Motor neuron (in vitro differentiated cells): ENCODE measurements at regions of chr22 and their contacts with region 1.

Region 1: DNA sequence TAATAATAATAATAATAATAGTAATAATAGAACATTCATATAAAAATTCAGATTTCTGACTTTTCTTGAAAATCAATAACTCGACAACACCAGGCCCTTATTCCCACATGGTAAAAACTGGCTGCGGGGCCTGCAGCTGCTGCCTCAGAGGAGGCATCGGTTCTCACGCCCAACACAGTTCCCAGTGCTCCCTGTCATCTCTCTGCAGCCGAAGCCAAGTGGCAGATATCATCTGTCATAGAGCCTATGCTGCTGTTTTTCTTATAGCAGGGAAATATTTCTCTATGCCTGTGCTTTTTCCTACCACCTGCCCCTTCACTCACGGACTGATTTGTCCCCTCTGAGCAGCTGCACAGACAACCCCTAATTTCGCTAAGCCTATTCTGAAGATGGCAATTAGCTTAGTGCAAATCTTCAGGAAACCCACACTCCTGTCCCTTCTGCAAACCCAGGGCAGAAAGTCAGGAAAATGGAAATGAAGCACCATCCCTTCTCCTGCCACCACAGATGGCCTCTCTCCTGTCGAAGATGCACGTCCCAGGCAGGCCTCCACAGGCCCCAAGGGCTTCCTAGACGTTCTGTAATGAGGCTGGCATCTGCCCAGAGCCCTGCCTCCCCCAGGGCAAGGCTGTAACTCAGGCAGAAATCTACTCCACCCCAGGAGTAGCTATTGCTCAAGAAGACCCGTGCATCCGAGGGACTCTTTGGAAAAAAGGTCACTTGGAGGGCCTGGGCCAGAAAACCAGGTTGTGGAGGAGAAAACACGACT is 66.6 kb downstream of the SYN3 start:
- ATAC-seq: peak in 3 of 8 experiments; percentile 76 to 78 (median 77)
- H3K4me3 ChIP-seq: no peak overlapping the region
- H3K27ac ChIP-seq: peak overlapping the region; percentile 60 to 68
- H3K4me1 ChIP-seq: peaks cover 47 to 48% of the 10 kb centered on the region in 2 donors

Region 2: GRCh38 chr22:32528984-32529982 is 462.3 kb before region 1 on chr22:
- in situ Hi-C with region 1: loop called in 7 of 9 experiments (anchors 10 to 25 kb)
- ATAC-seq: peak; percentile 23 to 80 (median 65)
- H3K4me3 ChIP-seq: no peak overlapping the region
- H3K27ac ChIP-seq: no peak overlapping the region
- H3K4me1 ChIP-seq: peaks cover 28 to 35% of the 10 kb centered on the region in 2 donors